Heart left ventricle (tissue), 16 donors: ENCODE measurements at regions of chr3 and their contacts with region 1.

Region 1: GRCh38 chr3:119579366-119580165 is at the start of gene ADPRH:
- DNase-seq: peak; percentile 86 to 94 (median 91)
- ATAC-seq: peak; percentile 88 to 96 (median 92)
- H3K4me3 ChIP-seq: peak within 1 kb of the TSS; percentile 21 to 78 (median 68)
- H3K27ac ChIP-seq: peak within 1 kb of the TSS; percentile 86 to 99 (median 96)
- H3K4me1 ChIP-seq: peaks cover 0 to 27% (median 14%) of the 10 kb centered on the region in 12 donors
- H3K27me3 ChIP-seq: no peaks in the 10 kb centered on the region
- CTCF ChIP-seq: peak in 2 of 12 donors; percentile 4 to 9
- POLR2A ChIP-seq: peak in 1 of 2 donors; percentile 48
- total RNA-seq, gene ADPRH: 9.7 to 17.5 (median 11.5) TPM

Region 2: DNA sequence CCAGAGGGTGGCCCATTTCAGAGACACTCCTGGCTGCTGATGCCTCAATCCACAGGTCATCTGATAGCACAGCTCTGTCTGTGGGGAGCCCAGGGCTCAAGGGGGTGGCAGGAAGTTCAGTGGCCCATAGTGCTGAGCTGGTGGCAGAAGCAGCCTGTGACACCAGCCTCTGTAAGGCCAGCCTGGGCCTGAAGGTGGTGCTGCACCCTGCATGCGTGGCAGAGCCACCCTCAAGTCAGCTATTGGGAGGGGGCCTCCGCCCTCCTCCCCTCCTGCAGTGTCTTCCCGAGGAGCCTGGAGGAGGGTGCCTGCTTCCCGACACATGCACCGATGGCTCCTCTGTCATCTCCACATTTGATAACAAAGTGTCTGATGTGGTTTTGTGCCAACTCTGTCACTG is 21.2 kb after region 1 on chr3:
- intact Hi-C with region 1: loop called in 2 of 10 experiments (anchors 2 kb)
- DNase-seq: peak; percentile 35 to 66 (median 53)
- ATAC-seq: peak; percentile 72 to 84 (median 82)
- H3K4me3 ChIP-seq: no peak overlapping the region
- H3K27ac ChIP-seq: peak overlapping the region in 9 of 12 donors; percentile 15 to 85 (median 54)
- H3K4me1 ChIP-seq: peaks cover 3 to 80% (median 55%) of the 10 kb centered on the region in 12 donors
- H3K27me3 ChIP-seq: no peaks in the 10 kb centered on the region
- CTCF ChIP-seq: peak; percentile 36 to 69 (median 56)
- POLR2A ChIP-seq: no peak

Region 3: DNA sequence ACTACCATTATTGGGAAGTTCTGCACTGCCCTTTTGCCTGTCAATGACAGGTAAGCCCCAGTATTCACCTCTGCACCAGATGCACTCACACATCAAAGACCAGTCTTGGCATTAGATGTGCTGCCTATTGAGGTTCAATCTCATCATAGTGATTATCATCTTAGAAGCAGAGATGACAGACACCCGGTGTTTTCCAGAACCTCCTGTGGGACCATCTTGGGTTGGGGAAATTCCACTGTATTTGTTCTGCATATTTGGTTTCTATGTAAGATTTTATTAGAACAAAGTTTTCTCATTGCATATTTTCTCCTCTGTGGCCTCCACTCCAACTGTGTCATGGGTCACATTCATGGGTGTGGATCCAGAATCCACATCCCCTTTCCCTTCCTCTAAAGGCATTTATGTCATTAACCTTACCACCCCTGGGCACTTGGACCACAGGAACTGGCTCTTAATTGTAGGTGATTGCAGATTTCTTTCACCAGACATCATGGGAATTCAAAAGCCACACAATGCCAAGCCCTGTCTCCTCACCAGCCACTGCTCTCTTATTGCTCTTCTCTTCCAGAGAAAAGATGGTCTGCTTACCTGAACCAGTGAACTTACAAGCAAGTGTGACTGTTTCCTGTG is 49.4 kb after region 1 on chr3:
- intact Hi-C with region 1: loop called in 1 of 10 experiments (anchors 5 kb)
- DNase-seq: no peak
- ATAC-seq: peak in 3 of 4 donors; percentile 24 to 41 (median 27)
- H3K4me3 ChIP-seq: no peak overlapping the region
- H3K27ac ChIP-seq: peak overlapping the region in 11 of 12 donors; percentile 41 to 84 (median 65)
- H3K4me1 ChIP-seq: peaks cover 0 to 72% (median 38%) of the 10 kb centered on the region in 12 donors
- H3K27me3 ChIP-seq: no peaks in the 10 kb centered on the region
- CTCF ChIP-seq: no peak
- POLR2A ChIP-seq: no peak

Region 4: DNA sequence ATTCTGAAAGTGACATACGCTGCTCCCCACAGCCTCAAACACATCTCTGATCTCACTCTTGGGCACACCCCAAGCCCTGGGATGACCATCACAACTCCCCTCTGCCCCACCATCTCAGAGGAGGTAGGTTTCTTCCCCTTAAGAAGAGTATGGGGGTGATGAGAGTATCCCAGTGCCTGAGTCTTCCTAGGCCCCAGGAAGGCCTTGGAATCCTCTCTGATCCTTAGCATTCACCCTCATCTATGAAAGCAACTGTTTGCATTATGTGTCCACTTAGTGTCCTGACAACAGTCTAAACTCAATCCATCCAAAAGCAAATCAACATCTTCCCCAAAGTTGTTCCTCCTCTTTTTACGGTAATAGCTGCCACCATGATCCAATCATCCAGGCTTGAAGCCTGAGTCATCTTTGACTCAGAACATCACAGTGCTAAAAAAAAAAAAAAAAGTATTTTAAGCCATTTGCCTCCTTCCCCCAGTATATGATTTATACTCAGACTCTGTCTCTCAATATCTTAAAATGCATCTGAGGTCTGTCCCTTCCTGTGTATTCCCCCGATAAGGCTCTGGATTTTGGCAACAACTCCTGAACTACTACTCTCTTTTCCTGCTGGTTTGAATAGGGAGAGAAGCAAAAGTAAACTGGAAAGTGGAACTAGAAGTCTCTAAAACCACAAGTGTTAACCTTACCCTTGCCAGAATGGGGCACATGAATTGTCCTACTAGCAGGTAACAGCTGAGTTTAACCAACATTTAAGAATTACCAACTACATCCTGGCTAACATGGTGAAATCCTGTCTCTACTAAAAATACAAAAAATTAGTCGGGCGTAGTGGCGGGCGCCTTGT is 58.3 kb after region 1 on chr3:
- intact Hi-C with region 1: loop called in 2 of 10 experiments (anchors 5 kb)
- DNase-seq: no peak
- ATAC-seq: peak; percentile 18 to 69 (median 29)
- H3K4me3 ChIP-seq: peak overlapping the region in 4 of 12 donors; percentile 4 to 12 (median 7)
- H3K27ac ChIP-seq: peak overlapping the region; percentile 69 to 97 (median 85)
- H3K4me1 ChIP-seq: peaks cover 3 to 73% (median 46%) of the 10 kb centered on the region in 12 donors
- H3K27me3 ChIP-seq: no peaks in the 10 kb centered on the region
- CTCF ChIP-seq: no peak
- POLR2A ChIP-seq: no peak

Region 5: DNA sequence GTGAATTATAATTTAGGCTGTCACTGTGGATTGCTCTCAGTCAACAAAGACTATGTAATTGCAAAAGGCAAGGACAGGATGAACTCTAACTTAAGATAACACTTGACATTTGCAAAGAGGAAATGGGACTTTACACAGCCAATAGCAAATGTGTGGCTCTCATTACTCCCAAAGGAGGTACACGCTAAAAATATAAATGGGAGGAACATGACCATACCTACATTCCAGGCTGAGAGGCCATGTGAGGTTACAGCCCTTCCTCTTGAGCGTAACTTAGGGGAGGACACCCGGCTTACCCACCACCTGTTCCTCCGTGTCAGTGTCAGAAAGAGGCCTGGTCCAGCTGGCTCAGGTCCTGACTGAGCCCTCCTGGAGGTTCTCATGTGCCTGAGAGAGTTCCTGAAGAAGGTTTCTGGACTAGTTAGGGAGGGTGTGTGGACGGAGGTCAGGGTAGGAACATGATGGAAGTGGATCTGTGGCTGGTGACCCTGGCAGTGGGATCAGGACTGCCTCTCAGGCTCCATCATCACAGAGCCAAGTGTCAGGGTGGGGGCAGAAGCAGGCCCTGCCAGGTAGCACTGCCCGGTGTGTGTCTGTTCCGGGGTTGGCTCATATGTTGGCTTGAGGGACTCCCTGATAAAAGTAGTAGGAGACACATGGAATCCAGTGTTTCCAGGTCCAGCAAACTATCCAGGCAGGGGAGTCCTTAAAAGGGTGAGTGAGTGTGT is 72.9 kb after region 1 on chr3:
- intact Hi-C with region 1: loop called in 2 of 10 experiments (anchors 5 kb)
- DNase-seq: peak in 4 of 5 donors; percentile 68 to 85 (median 79)
- ATAC-seq: peak; percentile 81 to 85 (median 84)
- H3K4me3 ChIP-seq: peak overlapping the region in 3 of 12 donors; percentile 2 to 30 (median 4)
- H3K27ac ChIP-seq: peak overlapping the region; percentile 61 to 99 (median 92)
- H3K4me1 ChIP-seq: peaks cover 11 to 75% (median 61%) of the 10 kb centered on the region in 12 donors
- H3K27me3 ChIP-seq: no peaks in the 10 kb centered on the region
- CTCF ChIP-seq: no peak
- POLR2A ChIP-seq: no peak

Region 6: DNA sequence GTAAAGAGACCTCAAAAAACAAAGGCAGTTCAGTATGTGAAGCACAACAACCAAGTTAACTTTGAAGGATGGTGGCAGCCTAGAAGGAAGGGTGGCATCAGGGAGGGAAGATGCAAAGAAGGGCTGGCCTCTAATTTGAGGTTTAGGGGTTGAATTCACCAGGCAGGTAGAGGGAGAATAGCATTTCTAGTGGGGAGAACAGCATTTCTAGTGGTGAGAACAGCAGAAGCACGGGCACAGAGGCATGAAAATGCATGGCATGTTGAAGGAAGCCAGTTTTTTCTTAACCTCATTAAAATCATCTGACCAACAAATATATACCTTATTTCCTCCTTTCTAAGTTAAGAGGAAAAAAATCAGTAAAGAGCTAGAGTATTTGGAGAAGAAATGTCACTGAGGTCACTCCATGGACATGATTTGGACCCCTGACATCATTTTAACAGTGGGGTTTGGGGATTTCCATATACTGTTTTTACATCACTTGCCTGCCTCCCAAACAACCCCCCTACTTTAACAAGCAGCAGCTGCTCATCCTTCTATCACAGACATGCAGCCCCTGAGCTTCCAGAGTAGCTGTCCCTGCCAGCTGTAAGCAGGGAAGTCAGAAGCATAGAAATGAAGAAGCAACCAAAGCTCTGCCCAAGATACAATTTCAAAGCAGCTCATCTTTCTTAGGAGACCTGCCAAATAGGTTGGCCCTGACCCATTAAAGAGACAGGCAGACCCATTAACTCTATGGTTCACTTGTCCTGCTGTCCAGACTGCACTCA is 83.2 kb after region 1 on chr3:
- intact Hi-C with region 1: loop called in 1 of 10 experiments (anchors 5 kb)
- DNase-seq: peak in 1 of 5 donors; percentile 30
- ATAC-seq: no peak
- H3K4me3 ChIP-seq: peak overlapping the region in 3 of 12 donors; percentile 14 to 22 (median 18)
- H3K27ac ChIP-seq: peak overlapping the region; percentile 87 to 99 (median 96)
- H3K4me1 ChIP-seq: peaks cover 0 to 70% (median 29%) of the 10 kb centered on the region in 12 donors
- H3K27me3 ChIP-seq: no peaks in the 10 kb centered on the region
- CTCF ChIP-seq: peak in 4 of 12 donors; percentile 8 to 23 (median 17)
- POLR2A ChIP-seq: peak in 1 of 2 donors; percentile 22

Region 7: GRCh38 chr3:119810018-119810435 is 230.5 kb after region 1 on chr3:
- intact Hi-C with region 1: no loop called
- DNase-seq: peak in 4 of 5 donors; percentile 22 to 77 (median 38)
- ATAC-seq: peak in 3 of 4 donors; percentile 57 to 60 (median 58)
- H3K4me3 ChIP-seq: peak overlapping the region; percentile 31 to 64 (median 50)
- H3K27ac ChIP-seq: peak overlapping the region in 1 of 12 donors; percentile 24
- H3K4me1 ChIP-seq: peaks cover 0 to 22% (median 8%) of the 10 kb centered on the region in 12 donors
- H3K27me3 ChIP-seq: peaks cover 0 to 7% (median 0%) of the 10 kb centered on the region in 9 donors
- CTCF ChIP-seq: peak in 4 of 12 donors; percentile 10 to 33 (median 26)
- POLR2A ChIP-seq: no peak